IMR-90 (cell line): ENCODE measurements at regions of chr14 and their contacts with region 1.

Region 1: GRCh38 chr14:103562429-103563225 is at the starts of genes BAG5 and COA8:
- DNase-seq: peak; percentile 75
- ATAC-seq: peak; percentile 85
- H3K4me3 ChIP-seq: peak within 1 kb of the TSS; percentile 85
- H3K27ac ChIP-seq: peak within 1 kb of the TSS; percentile 87
- H3K4me1 ChIP-seq: peaks cover 15% of the 10 kb centered on the region
- H3K27me3 ChIP-seq: no peaks in the 10 kb centered on the region
- CTCF ChIP-seq: no peak
- POLR2A ChIP-seq: peak; percentile 69
- RAD21 ChIP-seq: no peak
- total RNA-seq, gene BAG5: 22.2 and 32.2 TPM in 2 replicates
- total RNA-seq, gene COA8: 12.2 and 20.6 TPM in 2 replicates

Region 2: DNA sequence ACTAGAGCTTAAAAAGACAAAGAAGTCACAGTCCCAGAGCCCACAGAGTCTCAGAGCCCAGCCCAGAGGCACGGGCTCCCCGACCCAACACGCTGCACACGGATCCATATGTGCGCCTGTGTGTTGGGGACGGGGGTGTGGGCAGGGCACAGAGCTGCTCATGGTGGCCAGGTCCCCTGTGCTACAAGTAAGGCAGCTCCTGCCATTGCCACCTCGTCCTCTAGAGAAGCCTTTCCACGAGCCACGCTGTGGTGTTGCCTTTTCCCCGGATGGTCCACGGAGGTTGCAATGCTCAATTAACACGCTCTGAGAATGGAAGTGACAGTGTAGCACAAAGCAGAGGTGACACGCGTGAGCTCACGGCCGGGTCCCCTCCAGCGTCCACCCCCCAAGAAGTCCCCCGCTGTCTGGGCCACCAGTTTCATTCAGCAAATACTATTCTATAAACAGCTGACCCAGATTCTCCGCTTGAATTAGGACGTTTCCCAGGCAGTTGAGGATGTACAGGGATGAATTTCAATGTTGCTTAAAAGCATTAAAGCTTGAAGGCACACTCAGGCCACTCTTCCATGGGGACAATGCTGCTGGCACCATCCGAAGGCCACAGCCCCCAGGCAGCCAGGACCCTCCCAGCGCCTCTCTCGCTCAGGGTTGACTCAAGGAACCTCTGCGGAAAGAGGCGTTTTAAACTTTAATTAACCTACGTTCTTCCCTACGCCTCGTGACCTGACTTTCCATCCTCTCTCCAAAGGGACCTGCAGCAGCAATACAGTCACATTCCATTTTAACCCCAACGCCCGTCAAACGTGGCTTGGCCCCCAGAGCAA is 251.2 kb before region 1 on chr14:
- CTCF ChIA-PET with region 1: no interaction called
- POLR2A ChIA-PET with region 1: no interaction called
- dilution Hi-C with region 1: no loop called
- in situ Hi-C with region 1: no loop called
- intact Hi-C with region 1: no loop called
- DNase-seq: no peak
- ATAC-seq: no peak
- H3K4me3 ChIP-seq: no peak overlapping the region
- H3K27ac ChIP-seq: no peak overlapping the region
- H3K4me1 ChIP-seq: peaks cover 3% of the 10 kb centered on the region
- H3K27me3 ChIP-seq: peaks cover 7% of the 10 kb centered on the region
- CTCF ChIP-seq: no peak
- POLR2A ChIP-seq: no peak
- RAD21 ChIP-seq: no peak

Region 3: DNA sequence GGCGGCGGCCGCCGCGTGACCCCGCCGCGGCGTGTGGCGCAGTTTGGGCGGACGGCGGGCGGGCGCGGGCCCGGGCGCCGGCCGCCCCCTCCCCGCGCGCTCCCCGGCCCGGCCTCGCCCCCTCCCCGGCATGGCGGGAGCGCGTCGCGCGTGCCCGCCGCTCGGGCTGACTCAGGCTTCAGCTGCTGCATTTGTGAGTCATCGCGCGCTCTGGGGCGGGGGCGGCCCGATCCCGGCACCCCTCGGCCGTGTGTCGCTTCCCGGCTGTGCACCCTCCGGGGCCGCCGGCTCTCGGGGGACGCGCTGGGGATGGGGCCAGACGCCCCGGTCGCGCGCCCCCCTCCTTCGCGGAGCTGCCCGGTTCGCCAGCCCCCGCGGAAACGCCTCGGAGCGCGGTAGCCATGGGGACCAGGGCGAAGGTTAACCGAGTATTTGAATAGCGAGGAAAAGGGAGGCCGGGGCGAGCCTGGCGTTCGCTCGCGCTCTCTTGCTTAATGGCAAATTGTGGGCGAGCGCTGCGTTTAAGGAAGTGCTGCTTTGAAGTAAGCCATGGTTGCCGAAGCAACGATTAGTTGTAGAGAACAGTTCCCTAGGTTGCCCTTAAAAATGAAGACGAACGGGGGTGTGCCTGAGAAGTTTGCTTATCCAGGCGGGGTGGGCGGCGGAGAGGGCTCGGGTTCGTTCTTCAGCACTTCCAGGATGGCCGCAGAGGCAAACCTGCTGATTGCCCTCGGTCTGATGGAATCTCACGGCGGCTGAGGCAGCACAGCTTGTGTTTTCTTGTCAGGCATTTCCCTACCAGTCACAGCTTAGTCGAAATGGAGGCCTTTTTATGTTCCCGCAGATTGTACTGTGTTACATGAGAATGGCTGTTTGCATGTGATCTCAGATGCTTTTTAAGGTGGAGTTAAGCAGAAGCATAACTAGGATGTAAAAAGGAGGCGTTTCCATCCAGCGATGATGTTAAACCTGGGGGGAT is 227.7 kb before region 1 on chr14:
- CTCF ChIA-PET with region 1: no interaction called
- POLR2A ChIA-PET with region 1: no interaction called
- dilution Hi-C with region 1: no loop called
- in situ Hi-C with region 1: no loop called
- intact Hi-C with region 1: no loop called
- DNase-seq: peak; percentile 79
- ATAC-seq: peak; percentile 59
- H3K4me3 ChIP-seq: peak overlapping the region; percentile 83
- H3K27ac ChIP-seq: peak overlapping the region; percentile 97
- H3K4me1 ChIP-seq: peaks cover 3% of the 10 kb centered on the region
- H3K27me3 ChIP-seq: no peaks in the 10 kb centered on the region
- CTCF ChIP-seq: no peak
- POLR2A ChIP-seq: no peak
- RAD21 ChIP-seq: no peak

Region 4: GRCh38 chr14:103594265-103594664 is 31.6 kb after region 1 on chr14:
- CTCF ChIA-PET with region 1: interaction called, 5 read pairs
- POLR2A ChIA-PET with region 1: no interaction called
- dilution Hi-C with region 1: no loop called
- in situ Hi-C with region 1: no loop called
- intact Hi-C with region 1: loop called (anchors 2 kb)
- DNase-seq: peak; percentile 74
- ATAC-seq: peak; percentile 10; the same call in 1 of the 2 replicates
- H3K4me3 ChIP-seq: no peak overlapping the region
- H3K27ac ChIP-seq: 0 out of 2 replicates have a peak overlapping the region, but pooled peaks have one; percentile 2
- H3K4me1 ChIP-seq: peaks cover 14% of the 10 kb centered on the region
- H3K27me3 ChIP-seq: no peaks in the 10 kb centered on the region
- CTCF ChIP-seq: no peak
- POLR2A ChIP-seq: no peak
- RAD21 ChIP-seq: no peak

Region 5: GRCh38 chr14:103782376-103782775 is 219.7 kb after region 1 on chr14:
- CTCF ChIA-PET with region 1: no interaction called
- POLR2A ChIA-PET with region 1: no interaction called
- dilution Hi-C with region 1: no loop called
- in situ Hi-C with region 1: no loop called
- intact Hi-C with region 1: no loop called
- DNase-seq: no peak
- ATAC-seq: no peak
- H3K4me3 ChIP-seq: no peak overlapping the region
- H3K27ac ChIP-seq: no peak overlapping the region
- H3K4me1 ChIP-seq: no peaks in the 10 kb centered on the region
- H3K27me3 ChIP-seq: no peaks in the 10 kb centered on the region
- CTCF ChIP-seq: no peak
- POLR2A ChIP-seq: no peak
- RAD21 ChIP-seq: no peak